Activated naive CD4-positive, alpha-beta T cell treated with anti-CD3 and anti-CD28 coated beads for 36 hours (primary cell): ENCODE measurements at regions of chr11 and their contacts with region 1.

Region 1: GRCh38 chr11:14148653-14149273 is 186.2 kb downstream of the SPON1 start:
- DNase-seq: no peak
- H3K4me3 Mint-ChIP-seq: no peak overlapping the region
- H3K27ac Mint-ChIP-seq: no peak overlapping the region
- H3K4me1 Mint-ChIP-seq: peaks cover 13% of the 10 kb centered on the region
- H3K27me3 Mint-ChIP-seq: no peaks in the 10 kb centered on the region

Region 2: DNA sequence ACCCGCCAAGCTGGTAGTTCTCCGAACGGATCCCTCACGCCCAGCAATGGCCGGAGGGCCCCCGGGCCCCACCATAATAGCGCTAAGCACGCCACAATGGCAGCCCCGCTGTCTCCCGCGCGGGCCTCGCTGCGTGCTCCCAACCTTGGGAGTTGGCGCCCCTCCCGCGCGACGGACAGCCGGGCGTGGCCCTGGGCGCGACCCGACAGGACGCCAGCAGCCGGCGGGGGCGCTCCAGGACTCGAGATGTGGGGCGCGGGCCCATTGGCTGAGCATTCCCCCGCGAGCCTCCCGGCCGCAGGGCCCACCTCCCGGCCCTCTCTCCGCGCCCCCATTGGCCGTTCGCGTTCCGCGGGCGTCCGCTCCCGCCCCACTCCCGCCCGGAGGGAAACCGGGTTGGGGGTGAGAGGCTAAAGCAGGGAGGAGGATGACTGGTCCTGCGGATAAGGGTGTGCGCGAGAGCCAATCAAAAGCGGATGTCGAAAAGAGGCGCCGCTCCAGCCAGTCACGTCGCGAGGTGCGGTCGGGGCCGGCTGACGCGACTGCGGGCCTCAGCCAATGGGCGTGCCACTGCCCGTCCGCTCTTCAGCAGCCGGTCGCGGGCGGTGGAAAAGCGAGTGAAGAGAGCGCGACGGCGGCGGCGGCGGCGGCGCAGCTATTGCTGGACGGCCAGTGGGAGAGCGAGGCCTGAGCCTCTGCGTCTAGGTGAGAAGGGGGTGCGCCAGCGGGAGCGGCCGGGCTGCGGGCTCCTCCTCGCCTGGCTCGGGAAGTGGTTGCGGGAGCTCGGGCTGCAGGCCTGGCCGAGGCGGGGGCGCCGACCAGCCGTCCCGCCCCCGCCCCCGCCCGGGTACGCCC is 480.4 kb before region 1 on chr11 and contains the start of gene FAR1:
- CTCF ChIA-PET with region 1: no interaction called
- intact Hi-C with region 1: loop called (anchors 5 kb)
- DNase-seq: peak; percentile 98
- H3K4me3 Mint-ChIP-seq: peak within 1 kb of the TSS; percentile 95
- H3K27ac Mint-ChIP-seq: peak within 1 kb of the TSS; percentile 92
- H3K4me1 Mint-ChIP-seq: peaks cover 40% of the 10 kb centered on the region
- H3K27me3 Mint-ChIP-seq: peaks cover 7% of the 10 kb centered on the region
- total RNA-seq, gene FAR1: 37.2 to 42.3 TPM

Region 3: GRCh38 chr11:13861411-13861810 is 287.4 kb before region 1 on chr11:
- CTCF ChIA-PET with region 1: no interaction called
- intact Hi-C with region 1: loop called (anchors 2 kb)
- DNase-seq: peak; percentile 45
- H3K4me3 Mint-ChIP-seq: no peak overlapping the region
- H3K27ac Mint-ChIP-seq: peak overlapping the region; percentile 43
- H3K4me1 Mint-ChIP-seq: peaks cover 34% of the 10 kb centered on the region
- H3K27me3 Mint-ChIP-seq: no peaks in the 10 kb centered on the region

Region 4: GRCh38 chr11:13962562-13963168 is 186.1 kb before region 1 on chr11 and contains the start of gene SPON1:
- CTCF ChIA-PET with region 1: interaction called, 86 read pairs
- intact Hi-C with region 1: no loop called
- DNase-seq: peak; percentile 67
- H3K4me3 Mint-ChIP-seq: peak within 1 kb of the TSS; percentile 70
- H3K27ac Mint-ChIP-seq: no peak within 1 kb of the TSS
- H3K4me1 Mint-ChIP-seq: peaks cover 7% of the 10 kb centered on the region
- H3K27me3 Mint-ChIP-seq: peaks cover 39% of the 10 kb centered on the region
- total RNA-seq, gene SPON1: 0.24 to 0.25 TPM

Region 5: GRCh38 chr11:14119357-14119756 is 29.4 kb before region 1 on chr11:
- CTCF ChIA-PET with region 1: interaction called, 10 read pairs
- intact Hi-C with region 1: no loop called
- DNase-seq: peak; percentile 67
- H3K4me3 Mint-ChIP-seq: no peak overlapping the region
- H3K27ac Mint-ChIP-seq: no peak overlapping the region
- H3K4me1 Mint-ChIP-seq: peaks cover 19% of the 10 kb centered on the region
- H3K27me3 Mint-ChIP-seq: no peaks in the 10 kb centered on the region